Esophagus muscularis mucosa (tissue), 4 donors: ENCODE measurements at regions of chr6 and their contacts with region 1.

Region 1: DNA sequence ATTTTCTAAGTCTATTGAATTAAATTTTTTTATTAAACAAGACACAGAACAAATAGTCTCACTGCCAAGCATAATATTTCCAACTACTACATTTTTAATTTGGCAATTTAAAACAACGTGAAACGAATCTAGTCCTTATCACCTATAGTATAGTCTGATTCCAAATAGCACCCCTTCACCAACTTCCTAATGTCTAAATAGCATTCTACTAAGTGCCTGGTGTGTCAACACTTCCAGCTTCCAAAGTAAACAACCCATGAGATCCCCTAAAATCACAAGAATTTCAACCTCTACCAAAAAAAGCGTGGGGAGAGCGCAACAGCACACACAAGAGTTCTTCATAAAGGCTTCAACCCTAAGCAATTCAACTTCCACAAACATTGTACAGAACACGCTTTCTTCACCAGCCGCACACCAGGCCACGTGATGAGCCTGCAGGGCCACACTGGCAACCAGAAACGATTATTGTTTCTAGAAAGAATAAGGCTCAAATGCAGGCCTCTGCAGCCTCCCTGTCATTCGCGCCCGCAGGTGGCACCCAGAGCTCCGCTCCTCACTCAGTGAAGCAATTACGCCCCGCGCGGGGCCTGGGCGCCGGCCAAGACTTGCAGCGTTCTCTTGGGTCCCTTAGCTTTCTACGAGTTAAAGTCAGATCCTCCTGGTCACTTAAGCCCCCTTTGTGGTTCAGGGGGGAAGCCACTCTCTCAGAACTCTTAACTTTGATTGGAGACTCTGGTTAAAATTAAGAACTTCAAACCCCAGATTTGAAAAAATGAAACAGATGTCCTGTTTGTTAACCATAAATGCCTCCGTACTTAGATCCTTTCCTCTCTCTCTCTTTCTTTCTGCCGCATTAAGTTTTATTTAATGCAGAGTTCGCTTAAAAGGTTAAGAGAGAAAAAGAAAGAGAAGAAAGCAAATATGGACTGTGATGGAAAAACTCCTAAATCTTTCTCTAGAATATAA is 18.3 kb downstream of the SIM1 start:
- DNase-seq: peak; percentile 90
- H3K4me3 ChIP-seq: peak overlapping the region; percentile 1 to 38 (median 10)
- H3K27ac ChIP-seq: no peak overlapping the region
- H3K4me1 ChIP-seq: peaks cover 13 to 25% (median 20%) of the 10 kb centered on the region in 4 donors
- H3K27me3 ChIP-seq: peaks cover 4 to 80% (median 53%) of the 10 kb centered on the region in 4 donors
- CTCF ChIP-seq: no peak
- EP300 ChIP-seq: no peak
- POLR2A ChIP-seq: no peak

Region 2: GRCh38 chr6:99603421-99604165 is 842.8 kb before region 1 on chr6:
- intact Hi-C with region 1: loop called (anchors 10 kb)
- DNase-seq: no peak
- H3K4me3 ChIP-seq: peak overlapping the region; percentile 38 to 54 (median 46)
- H3K27ac ChIP-seq: no peak overlapping the region
- H3K4me1 ChIP-seq: peaks cover 30 to 59% (median 44%) of the 10 kb centered on the region in 4 donors
- H3K27me3 ChIP-seq: peaks cover 9 to 100% (median 81%) of the 10 kb centered on the region in 4 donors
- CTCF ChIP-seq: no peak
- EP300 ChIP-seq: no peak
- POLR2A ChIP-seq: no peak

Region 3: DNA sequence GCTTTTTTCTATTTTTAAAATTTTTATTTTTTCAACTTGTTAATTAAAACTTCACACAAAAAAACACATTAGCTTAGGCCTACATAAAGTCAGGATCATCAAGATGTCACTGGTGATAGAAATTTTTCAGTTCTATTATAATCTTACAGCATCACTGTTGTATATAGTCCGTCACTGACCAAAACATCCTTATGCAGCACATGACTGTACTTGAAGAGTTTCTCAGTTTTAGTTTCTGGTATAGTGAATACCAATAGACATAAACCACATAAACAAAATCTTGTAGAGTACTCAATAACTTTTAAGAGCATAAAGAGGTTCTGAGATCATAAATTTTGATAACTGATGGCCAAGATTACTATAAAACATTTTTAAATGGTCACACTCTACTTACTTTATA is 362.9 kb after region 1 on chr6:
- intact Hi-C with region 1: no loop called
- DNase-seq: no peak
- H3K4me3 ChIP-seq: no peak overlapping the region
- H3K27ac ChIP-seq: no peak overlapping the region
- H3K4me1 ChIP-seq: no peaks in the 10 kb centered on the region
- H3K27me3 ChIP-seq: no peaks in the 10 kb centered on the region
- CTCF ChIP-seq: no peak
- EP300 ChIP-seq: no peak
- POLR2A ChIP-seq: no peak